Left cardiac atrium (tissue), 4 donors: ENCODE measurements at regions of chr15 and their contacts with region 1.

Region 1: DNA sequence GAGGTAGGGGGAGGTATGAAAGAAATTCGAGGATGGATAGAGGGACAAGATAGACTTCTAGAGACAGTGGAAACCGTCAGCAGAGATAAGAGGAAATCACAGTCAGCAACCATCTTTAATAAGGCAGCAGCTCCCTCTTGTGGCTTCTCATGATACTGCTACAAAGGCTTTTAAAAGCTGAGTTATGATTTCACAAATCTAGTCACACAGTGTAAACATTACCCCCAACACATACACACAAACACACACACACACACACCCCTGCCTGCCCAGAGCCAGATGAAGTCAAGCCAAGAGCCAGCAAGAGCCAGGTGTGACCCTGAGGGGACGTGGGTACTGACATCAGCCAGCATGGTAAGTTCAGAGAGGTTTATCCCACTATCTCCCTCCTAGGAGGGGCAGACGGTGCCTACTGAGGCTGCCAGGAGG is 18.9 kb upstream of the TGM5 start:
- DNase-seq: no peak
- ATAC-seq: peak; percentile 75 to 76

Region 2: GRCh38 chr15:43225201-43225949 is 60.2 kb before region 1 on chr15:
- intact Hi-C with region 1: loop called (anchors 1 to 5 kb)
- DNase-seq: no peak
- ATAC-seq: peak; percentile 73 to 85

Region 3: GRCh38 chr15:43402255-43402654 is 116.6 kb after region 1 on chr15:
- intact Hi-C with region 1: no loop called
- DNase-seq: no peak
- ATAC-seq: no peak